Natural killer cell (primary cell): ENCODE measurements at regions of chr1 and their contacts with region 1.

Region 1: GRCh38 chr1:182604169-182605164 is at the start of gene RGS16:
- DNase-seq: peak; percentile 77 to 92
- ATAC-seq: peak; percentile 93 to 96 (median 95)
- H3K4me3 ChIP-seq: peak within 1 kb of the TSS; percentile 18
- H3K4me3 Mint-ChIP-seq: peak within 1 kb of the TSS; percentile 74
- H3K27ac ChIP-seq: no peak within 1 kb of the TSS
- H3K27ac Mint-ChIP-seq: peak within 1 kb of the TSS; percentile 55 to 56
- H3K4me1 ChIP-seq: peaks cover 18% of the 10 kb centered on the region
- H3K4me1 Mint-ChIP-seq: peaks cover 15 to 16% of the 10 kb centered on the region in 2 donors
- H3K27me3 ChIP-seq: peaks cover 19% of the 10 kb centered on the region
- H3K27me3 Mint-ChIP-seq: peaks cover 17 to 30% of the 10 kb centered on the region in 2 donors
- CTCF ChIP-seq: no peak
- total RNA-seq, gene RGS16: 1.3 to 9.6 (median 4.2) TPM

Region 2: DNA sequence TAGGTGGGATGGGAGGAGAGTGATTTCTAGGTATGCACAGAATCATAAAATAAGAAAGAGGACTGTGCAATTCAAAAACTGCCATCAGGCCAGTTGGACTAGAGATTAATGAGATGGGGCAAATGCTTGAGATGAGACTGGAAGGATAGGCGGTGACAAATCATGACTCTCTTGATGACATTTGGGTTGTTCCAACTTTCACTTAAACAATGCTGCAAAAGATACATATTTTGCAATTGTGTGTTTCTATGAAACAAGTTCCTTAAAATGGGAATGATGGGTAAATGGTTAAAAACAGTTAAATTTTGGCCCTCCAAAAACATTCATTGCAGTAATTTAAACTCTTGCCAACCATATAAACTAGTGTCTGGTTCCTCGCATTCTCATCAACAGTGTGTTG is 70.6 kb before region 1 on chr1:
- intact Hi-C with region 1: no loop called
- DNase-seq: no peak
- ATAC-seq: no peak
- H3K4me3 ChIP-seq: no peak overlapping the region
- H3K4me3 Mint-ChIP-seq: no peak overlapping the region
- H3K27ac ChIP-seq: no peak overlapping the region
- H3K27ac Mint-ChIP-seq: no peak overlapping the region
- H3K4me1 ChIP-seq: no peaks in the 10 kb centered on the region
- H3K4me1 Mint-ChIP-seq: no peaks in the 10 kb centered on the region
- H3K27me3 ChIP-seq: peaks cover 6% of the 10 kb centered on the region
- H3K27me3 Mint-ChIP-seq: peaks cover 8 to 44% of the 10 kb centered on the region in 2 donors
- CTCF ChIP-seq: no peak

Region 3: GRCh38 chr1:182614796-182615454 is 10.5 kb after region 1 on chr1:
- intact Hi-C with region 1: loop called (anchors 1 kb)
- DNase-seq: peak; percentile 53 to 72
- ATAC-seq: peak; percentile 45 to 61 (median 48)
- H3K4me3 ChIP-seq: peak overlapping the region; percentile 36
- H3K4me3 Mint-ChIP-seq: peak overlapping the region; percentile 89
- H3K27ac ChIP-seq: no peak overlapping the region
- H3K27ac Mint-ChIP-seq: peak overlapping the region; percentile 85 to 94
- H3K4me1 ChIP-seq: peaks cover 32% of the 10 kb centered on the region
- H3K4me1 Mint-ChIP-seq: peaks cover 35 to 39% of the 10 kb centered on the region in 2 donors
- H3K27me3 ChIP-seq: peaks cover 54% of the 10 kb centered on the region
- H3K27me3 Mint-ChIP-seq: peaks cover 75 to 88% of the 10 kb centered on the region in 2 donors
- CTCF ChIP-seq: no peak

Region 4: GRCh38 chr1:182629499-182630096 is 25.1 kb after region 1 on chr1:
- intact Hi-C with region 1: no loop called
- DNase-seq: peak; percentile 66 to 73
- ATAC-seq: peak; percentile 90 to 97 (median 92)
- H3K4me3 ChIP-seq: no peak overlapping the region
- H3K4me3 Mint-ChIP-seq: peak overlapping the region; percentile 60
- H3K27ac ChIP-seq: no peak overlapping the region
- H3K27ac Mint-ChIP-seq: peak overlapping the region; percentile 57 to 72
- H3K4me1 ChIP-seq: peaks cover 18% of the 10 kb centered on the region
- H3K4me1 Mint-ChIP-seq: peaks cover 38 to 47% of the 10 kb centered on the region in 2 donors
- H3K27me3 ChIP-seq: no peaks in the 10 kb centered on the region
- H3K27me3 Mint-ChIP-seq: peaks cover 49 to 87% of the 10 kb centered on the region in 2 donors
- CTCF ChIP-seq: no peak

Region 5: GRCh38 chr1:182662121-182662890 is 57.8 kb after region 1 on chr1:
- intact Hi-C with region 1: loop called (anchors 5 kb)
- DNase-seq: peak in 1 of 2 donors; percentile 10
- ATAC-seq: no peak
- H3K4me3 ChIP-seq: no peak overlapping the region
- H3K4me3 Mint-ChIP-seq: no peak overlapping the region
- H3K27ac ChIP-seq: no peak overlapping the region
- H3K27ac Mint-ChIP-seq: no peak overlapping the region
- H3K4me1 ChIP-seq: no peaks in the 10 kb centered on the region
- H3K4me1 Mint-ChIP-seq: no peaks in the 10 kb centered on the region
- H3K27me3 ChIP-seq: peaks cover 3% of the 10 kb centered on the region
- H3K27me3 Mint-ChIP-seq: peaks cover 17 to 54% of the 10 kb centered on the region in 2 donors
- CTCF ChIP-seq: no peak

Region 6: DNA sequence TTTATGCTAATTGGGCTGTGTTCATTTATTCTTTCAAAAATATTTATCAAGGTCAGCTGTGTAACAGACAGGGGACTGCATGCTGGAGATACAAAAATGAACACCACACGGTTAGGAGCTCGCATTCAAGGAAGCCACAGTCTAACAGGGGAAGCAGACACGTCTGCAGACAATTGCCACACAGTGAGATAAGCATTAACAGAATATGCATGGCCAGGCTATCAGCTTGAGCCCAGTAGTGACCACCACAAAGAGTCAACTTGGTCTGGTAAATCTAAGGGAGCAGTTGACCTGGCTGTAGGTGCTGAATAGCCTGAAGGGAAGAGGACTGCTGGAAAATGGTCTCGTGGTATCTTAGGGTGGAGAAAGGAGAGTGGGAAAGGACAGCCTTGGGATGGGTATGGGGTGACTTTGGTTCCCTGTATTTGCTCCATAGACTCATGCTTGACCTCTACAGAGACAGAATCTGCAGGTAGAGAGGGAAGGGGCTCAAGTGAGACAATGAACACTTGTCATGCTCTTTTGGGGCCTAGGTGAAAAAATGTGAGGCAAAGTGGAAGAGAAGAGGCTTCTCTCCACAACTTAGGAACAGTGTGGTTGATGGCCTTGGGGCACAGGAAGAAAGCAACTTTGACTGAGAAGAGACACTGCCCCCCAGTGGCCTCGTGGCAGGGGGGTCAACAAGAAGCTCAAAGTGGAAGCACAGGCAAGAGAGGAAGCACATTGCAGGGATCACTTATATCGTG is 177.5 kb after region 1 on chr1:
- intact Hi-C with region 1: loop called (anchors 1 kb)
- DNase-seq: peak; percentile 54 to 80
- ATAC-seq: peak; percentile 69 to 88 (median 84)
- H3K4me3 ChIP-seq: no peak overlapping the region
- H3K4me3 Mint-ChIP-seq: no peak overlapping the region
- H3K27ac ChIP-seq: no peak overlapping the region
- H3K27ac Mint-ChIP-seq: no peak overlapping the region
- H3K4me1 ChIP-seq: no peaks in the 10 kb centered on the region
- H3K4me1 Mint-ChIP-seq: peaks cover 7 to 10% of the 10 kb centered on the region in 2 donors
- H3K27me3 ChIP-seq: no peaks in the 10 kb centered on the region
- H3K27me3 Mint-ChIP-seq: peaks cover 8 to 23% of the 10 kb centered on the region in 2 donors
- CTCF ChIP-seq: peak; percentile 63